Activated CD8-positive, alpha-beta memory T cell treated with anti-CD3 and anti-CD28 coated beads, Interleukin-2, amount 10 ng/mL, durations not matched to agents 7 days and 5 days (primary cell): ENCODE measurements at regions of chr17 and their contacts with region 1.

Region 1: GRCh38 chr17:8189711-8190477 is at the start of gene BORCS6:
- DNase-seq: peak; percentile 99
- ATAC-seq: peak; percentile 70
- H3K4me3 Mint-ChIP-seq: no peak within 1 kb of the TSS
- H3K27ac Mint-ChIP-seq: no peak within 1 kb of the TSS
- H3K4me1 Mint-ChIP-seq: peaks cover 10% of the 10 kb centered on the region
- H3K27me3 Mint-ChIP-seq: no peaks in the 10 kb centered on the region
- total RNA-seq, gene BORCS6: 14.9 to 16.8 TPM

Region 2: DNA sequence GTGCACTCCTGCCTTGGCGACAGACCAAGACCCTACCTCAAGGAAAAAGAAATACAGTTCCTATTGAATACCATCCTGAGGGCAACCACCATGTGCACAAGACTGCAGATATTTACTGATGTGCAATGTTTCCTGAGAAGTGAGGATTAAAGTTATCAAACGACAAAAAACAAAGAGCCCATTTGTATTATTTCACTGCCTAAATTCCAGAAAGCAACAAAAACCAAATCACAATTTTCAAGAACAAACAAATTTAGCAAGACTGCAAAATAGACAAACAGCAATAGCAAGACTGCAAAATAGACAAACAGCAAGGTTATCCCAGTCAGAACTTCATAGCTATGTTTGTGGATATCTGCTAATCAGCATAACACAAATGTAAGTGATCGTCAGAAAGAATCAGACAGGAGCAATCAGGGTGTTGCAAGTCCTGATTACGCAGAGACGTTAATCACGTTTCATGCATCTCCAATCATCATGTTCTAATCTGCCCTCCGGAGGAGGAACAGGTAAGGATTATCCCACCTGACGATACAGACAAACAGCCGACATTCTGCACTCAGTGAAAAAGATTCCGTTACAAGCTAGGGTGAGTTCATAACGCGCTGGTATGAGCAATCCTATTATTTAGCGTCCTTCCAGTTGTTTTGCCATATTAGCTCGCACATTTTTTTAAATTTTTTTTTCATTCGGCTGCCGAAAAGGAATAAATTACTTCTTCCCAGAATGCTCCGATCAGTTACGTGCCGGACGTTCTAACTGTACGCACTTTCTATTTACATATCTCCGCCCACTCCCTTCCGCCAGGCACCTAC is 16.6 kb before region 1 on chr17:
- CTCF ChIA-PET with region 1: interaction called, 15 read pairs
- DNase-seq: peak; percentile 91
- ATAC-seq: peak; percentile 75
- H3K4me3 Mint-ChIP-seq: peak overlapping the region; percentile 77
- H3K27ac Mint-ChIP-seq: peak overlapping the region; percentile 99
- H3K4me1 Mint-ChIP-seq: peaks cover 41% of the 10 kb centered on the region
- H3K27me3 Mint-ChIP-seq: no peaks in the 10 kb centered on the region

Region 3: DNA sequence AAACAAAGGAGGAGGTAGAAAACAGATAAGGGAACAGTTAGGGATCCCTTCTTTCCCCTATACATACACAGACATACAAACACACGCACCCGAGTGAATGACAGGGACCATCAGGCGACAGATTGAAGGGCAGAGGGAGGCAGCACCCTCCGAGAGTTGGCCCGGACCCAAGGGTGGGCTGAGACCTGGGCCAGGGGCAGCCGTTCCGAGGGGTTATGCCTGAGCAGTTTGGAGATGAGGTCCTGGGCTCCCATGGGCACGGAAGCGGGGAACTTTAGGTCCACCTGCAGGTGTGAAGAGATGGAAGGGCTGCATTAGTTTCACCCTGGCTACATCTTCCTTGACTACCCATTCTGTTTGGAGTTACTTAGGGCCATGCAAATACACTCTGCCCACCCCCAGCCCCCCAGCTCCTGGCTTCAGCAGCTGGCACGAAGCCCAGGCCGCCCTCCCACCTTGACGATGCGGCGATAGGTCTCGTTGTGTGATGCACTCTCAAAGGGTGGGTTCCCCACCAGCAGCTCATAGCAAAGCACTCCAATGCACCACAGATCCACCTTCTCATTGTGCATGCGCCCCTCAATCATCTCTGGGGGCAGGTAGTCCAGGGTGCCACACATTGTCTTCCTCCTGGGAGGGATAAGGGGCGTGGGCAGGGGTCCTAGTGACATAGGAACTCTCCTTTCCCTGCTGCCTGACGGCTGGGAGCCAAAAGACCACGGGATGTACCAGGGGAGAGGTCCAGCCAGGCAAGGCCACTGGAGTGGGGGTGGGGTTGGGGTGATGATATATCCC is 15.1 kb after region 1 on chr17:
- CTCF ChIA-PET with region 1: interaction called, 15 read pairs
- DNase-seq: no peak
- ATAC-seq: no peak
- H3K4me3 Mint-ChIP-seq: no peak overlapping the region
- H3K27ac Mint-ChIP-seq: no peak overlapping the region
- H3K4me1 Mint-ChIP-seq: peaks cover 40% of the 10 kb centered on the region
- H3K27me3 Mint-ChIP-seq: no peaks in the 10 kb centered on the region

Region 4: DNA sequence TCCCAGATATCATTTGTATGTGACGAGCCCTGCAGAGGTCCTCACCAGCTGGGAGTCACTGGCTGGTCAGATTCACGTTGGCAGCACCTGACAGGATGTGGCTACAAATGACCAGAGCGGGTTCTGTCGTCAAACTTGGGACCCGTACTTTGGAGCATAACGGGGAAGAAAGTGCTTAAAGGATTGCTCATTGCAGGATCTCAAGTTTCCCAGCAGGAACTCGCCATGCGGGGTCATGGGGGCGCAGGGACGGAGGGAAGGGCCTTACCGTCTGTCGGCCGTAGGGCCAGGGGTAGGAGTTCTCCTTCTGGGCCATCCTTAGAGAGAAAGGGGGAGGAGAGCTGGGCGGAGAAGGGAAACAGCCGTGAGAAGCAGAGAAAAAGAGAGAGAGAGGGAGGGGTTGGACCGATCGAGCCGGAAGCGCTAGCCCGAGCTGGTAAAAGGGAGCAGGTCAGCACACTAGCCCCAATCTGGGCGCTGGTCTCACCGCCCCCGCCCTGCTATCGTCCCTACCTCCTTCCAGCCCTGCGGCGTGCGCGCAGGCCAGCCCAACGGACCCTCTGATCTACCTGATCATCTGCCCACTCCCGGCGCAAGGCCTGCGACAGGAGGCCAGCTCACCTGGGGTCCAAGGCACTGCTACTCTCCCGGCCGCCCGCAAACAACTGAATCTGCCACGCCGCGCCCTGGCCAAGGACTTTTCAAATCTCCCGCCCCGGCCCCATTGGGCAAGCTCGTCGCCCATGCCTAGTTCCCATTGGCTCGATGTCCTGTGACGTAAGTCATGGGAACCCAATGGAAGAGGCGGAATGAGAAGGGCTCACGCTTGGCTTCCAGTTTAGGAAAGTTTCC is 20.2 kb after region 1 on chr17 and contains the start of gene AURKB:
- CTCF ChIA-PET with region 1: interaction called, 15 read pairs
- DNase-seq: peak; percentile 97
- ATAC-seq: peak; percentile 99
- H3K4me3 Mint-ChIP-seq: peak within 1 kb of the TSS; percentile 100
- H3K27ac Mint-ChIP-seq: peak within 1 kb of the TSS; percentile 99
- H3K4me1 Mint-ChIP-seq: peaks cover 35% of the 10 kb centered on the region
- H3K27me3 Mint-ChIP-seq: no peaks in the 10 kb centered on the region
- total RNA-seq, gene AURKB: 197 to 234 TPM

Region 5: GRCh38 chr17:8248751-8249607 is 59.1 kb after region 1 on chr17 and contains the start of gene PFAS:
- CTCF ChIA-PET with region 1: interaction called, 19 read pairs
- DNase-seq: peak; percentile 98
- ATAC-seq: peak; percentile 75
- H3K4me3 Mint-ChIP-seq: peak within 1 kb of the TSS; percentile 98
- H3K27ac Mint-ChIP-seq: peak within 1 kb of the TSS; percentile 100
- H3K4me1 Mint-ChIP-seq: peaks cover 38% of the 10 kb centered on the region
- H3K27me3 Mint-ChIP-seq: no peaks in the 10 kb centered on the region
- total RNA-seq, gene PFAS: 75.1 to 113 TPM